Gastrocnemius medialis (tissue), 4 donors: ENCODE measurements at regions of chr1 and their contacts with region 1.

Region 1: GRCh38 chr1:210407207-210407886 is 78.6 kb downstream of the HHAT start:
- DNase-seq: peak in 1 of 2 donors; percentile 28
- ATAC-seq: peak in 1 of 2 donors; percentile 49
- H3K4me3 ChIP-seq: no peak overlapping the region
- H3K27ac ChIP-seq: no peak overlapping the region
- H3K4me1 ChIP-seq: no peaks in the 10 kb centered on the region
- H3K27me3 ChIP-seq: no peaks in the 10 kb centered on the region
- CTCF ChIP-seq: peak; percentile 58 to 90 (median 72)
- POLR2A ChIP-seq: no peak

Region 2: GRCh38 chr1:210200124-210200736 is 207.1 kb before region 1 on chr1:
- in situ Hi-C with region 1: no loop called
- intact Hi-C with region 1: no loop called
- DNase-seq: no peak
- ATAC-seq: no peak
- H3K4me3 ChIP-seq: no peak overlapping the region
- H3K27ac ChIP-seq: no peak overlapping the region
- H3K4me1 ChIP-seq: no peaks in the 10 kb centered on the region
- H3K27me3 ChIP-seq: no peaks in the 10 kb centered on the region
- CTCF ChIP-seq: no peak
- POLR2A ChIP-seq: no peak

Region 3: GRCh38 chr1:210455840-210456603 is 48.7 kb after region 1 on chr1:
- in situ Hi-C with region 1: no loop called
- intact Hi-C with region 1: no loop called
- DNase-seq: no peak
- ATAC-seq: no peak
- H3K4me3 ChIP-seq: no peak overlapping the region
- H3K27ac ChIP-seq: no peak overlapping the region
- H3K4me1 ChIP-seq: no peaks in the 10 kb centered on the region
- H3K27me3 ChIP-seq: no peaks in the 10 kb centered on the region
- CTCF ChIP-seq: no peak
- POLR2A ChIP-seq: no peak

Region 4: GRCh38 chr1:210951279-210951678 is 543.9 kb after region 1 on chr1:
- in situ Hi-C with region 1: no loop called
- intact Hi-C with region 1: loop called (anchors 5 kb)
- DNase-seq: no peak
- ATAC-seq: no peak
- H3K4me3 ChIP-seq: no peak overlapping the region
- H3K27ac ChIP-seq: no peak overlapping the region
- H3K4me1 ChIP-seq: no peaks in the 10 kb centered on the region
- H3K27me3 ChIP-seq: no peaks in the 10 kb centered on the region
- CTCF ChIP-seq: no peak
- POLR2A ChIP-seq: no peak